SK-N-SH (cell line): ENCODE measurements at regions of chr2 and their contacts with region 1.

Region 1: DNA sequence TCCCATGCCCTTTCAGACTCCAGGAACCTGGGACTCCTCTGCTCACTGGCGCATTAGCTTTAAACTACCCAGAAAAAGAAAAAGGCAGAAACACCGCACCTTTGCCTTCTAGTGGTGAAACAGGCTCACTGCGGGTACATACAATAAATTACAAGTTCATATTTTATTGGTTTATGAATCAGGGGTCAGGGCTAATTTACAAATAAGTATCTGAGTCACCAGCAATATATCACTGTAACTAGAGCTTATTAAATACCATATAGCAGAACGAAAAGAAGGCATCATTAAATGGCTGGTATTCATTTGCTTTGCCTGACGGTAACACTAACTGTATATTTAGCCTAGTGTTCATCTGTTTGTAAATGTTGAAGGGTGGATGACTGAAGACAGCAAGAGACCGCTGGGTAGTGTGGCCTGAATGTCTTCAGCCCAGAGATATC is 26.9 kb upstream of the DTNB start:
- DNase-seq: peak; percentile 76
- H3K4me3 ChIP-seq: no peak overlapping the region
- H3K27ac ChIP-seq: no peak overlapping the region
- H3K4me1 ChIP-seq: peaks cover 3 to 6% of the 10 kb centered on the region in 2 experiments; a peak in 2 of 4 replicates
- H3K27me3 ChIP-seq: no peaks in the 10 kb centered on the region
- CTCF ChIP-seq: peak; percentile 91
- EP300 ChIP-seq: no peak
- RAD21 ChIP-seq: peak; percentile 81

Region 2: DNA sequence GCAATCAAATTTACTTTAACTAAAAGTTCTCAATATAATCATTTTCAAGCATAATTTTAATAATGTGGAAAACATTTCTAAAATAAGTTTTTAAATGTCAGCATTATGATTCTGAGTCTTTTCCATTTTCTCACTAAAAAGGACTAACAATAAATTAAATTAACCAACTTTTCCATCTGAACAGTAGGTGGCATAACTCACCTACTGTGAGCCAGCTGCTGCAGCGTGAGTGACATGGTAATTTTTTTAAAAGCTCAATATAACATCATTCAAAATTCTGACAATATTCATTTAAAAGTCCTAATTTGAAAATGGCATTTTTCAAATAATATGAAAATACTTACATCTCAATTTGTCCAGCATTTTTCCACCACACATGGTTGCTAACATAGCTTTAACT is 93.3 kb before region 1 on chr2:
- CTCF ChIA-PET with region 1: interaction called, 92 read pairs
- POLR2A ChIA-PET with region 1: no interaction called
- DNase-seq: peak; percentile 39
- H3K4me3 ChIP-seq: no peak overlapping the region
- H3K27ac ChIP-seq: no peak overlapping the region
- H3K4me1 ChIP-seq: peaks cover 0 to 4% of the 10 kb centered on the region in 2 experiments; a peak in 1 of 4 replicates
- H3K27me3 ChIP-seq: no peaks in the 10 kb centered on the region
- CTCF ChIP-seq: peak; percentile 92
- EP300 ChIP-seq: no peak
- RAD21 ChIP-seq: peak; percentile 86

Region 3: GRCh38 chr2:25664183-25664964 is 35.9 kb before region 1 on chr2:
- CTCF ChIA-PET with region 1: interaction called, 17 read pairs
- POLR2A ChIA-PET with region 1: no interaction called
- DNase-seq: peak; percentile 64
- H3K4me3 ChIP-seq: no peak overlapping the region
- H3K27ac ChIP-seq: no peak overlapping the region
- H3K4me1 ChIP-seq: peaks cover 0 to 2% of the 10 kb centered on the region in 2 experiments; a peak in 1 of 4 replicates
- H3K27me3 ChIP-seq: no peaks in the 10 kb centered on the region
- CTCF ChIP-seq: peak; percentile 85
- EP300 ChIP-seq: no peak
- RAD21 ChIP-seq: peak; percentile 80

Region 4: DNA sequence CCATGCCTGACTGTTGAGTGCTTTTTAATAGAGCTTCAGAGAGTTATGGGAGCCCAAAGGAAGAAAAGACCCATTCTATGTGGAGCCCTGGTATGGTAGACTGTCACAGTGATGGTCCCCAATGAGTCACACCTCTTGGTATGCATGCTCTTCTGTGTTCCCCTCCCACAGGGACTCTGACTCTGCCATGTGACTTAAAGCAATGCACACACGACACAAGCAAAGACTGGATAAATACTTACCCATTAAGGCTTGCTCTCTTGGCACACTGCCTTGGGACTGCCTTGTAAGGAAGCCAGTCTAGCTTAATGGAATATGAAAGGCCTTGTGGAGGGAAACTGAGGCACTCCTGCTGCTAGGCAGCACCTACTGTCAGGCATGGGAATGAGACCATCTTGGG is 10.2 kb before region 1 on chr2:
- CTCF ChIA-PET with region 1: interaction called, 101 read pairs
- POLR2A ChIA-PET with region 1: no interaction called
- DNase-seq: no peak
- H3K4me3 ChIP-seq: no peak overlapping the region
- H3K27ac ChIP-seq: no peak overlapping the region
- H3K4me1 ChIP-seq: no peaks in the 10 kb centered on the region
- H3K27me3 ChIP-seq: no peaks in the 10 kb centered on the region
- CTCF ChIP-seq: no peak
- EP300 ChIP-seq: no peak
- RAD21 ChIP-seq: no peak